ENCODE measurements at regions of chr1 and their contacts with region 1.

Region 1: GRCh38 chr1:161153679-161154426 is at the start of gene UFC1:
- DNase-seq: peak; percentile 94
- H3K4me3 Mint-ChIP-seq: peak within 1 kb of the TSS; percentile 92
- H3K27ac Mint-ChIP-seq: peak within 1 kb of the TSS; percentile 100
- H3K4me1 Mint-ChIP-seq: peaks cover 18% of the 10 kb centered on the region
- H3K27me3 Mint-ChIP-seq: no peaks in the 10 kb centered on the region
- CTCF ChIP-seq: no peak
- total RNA-seq, gene UFC1: 123 and 125 TPM in 2 replicates

Region 2: DNA sequence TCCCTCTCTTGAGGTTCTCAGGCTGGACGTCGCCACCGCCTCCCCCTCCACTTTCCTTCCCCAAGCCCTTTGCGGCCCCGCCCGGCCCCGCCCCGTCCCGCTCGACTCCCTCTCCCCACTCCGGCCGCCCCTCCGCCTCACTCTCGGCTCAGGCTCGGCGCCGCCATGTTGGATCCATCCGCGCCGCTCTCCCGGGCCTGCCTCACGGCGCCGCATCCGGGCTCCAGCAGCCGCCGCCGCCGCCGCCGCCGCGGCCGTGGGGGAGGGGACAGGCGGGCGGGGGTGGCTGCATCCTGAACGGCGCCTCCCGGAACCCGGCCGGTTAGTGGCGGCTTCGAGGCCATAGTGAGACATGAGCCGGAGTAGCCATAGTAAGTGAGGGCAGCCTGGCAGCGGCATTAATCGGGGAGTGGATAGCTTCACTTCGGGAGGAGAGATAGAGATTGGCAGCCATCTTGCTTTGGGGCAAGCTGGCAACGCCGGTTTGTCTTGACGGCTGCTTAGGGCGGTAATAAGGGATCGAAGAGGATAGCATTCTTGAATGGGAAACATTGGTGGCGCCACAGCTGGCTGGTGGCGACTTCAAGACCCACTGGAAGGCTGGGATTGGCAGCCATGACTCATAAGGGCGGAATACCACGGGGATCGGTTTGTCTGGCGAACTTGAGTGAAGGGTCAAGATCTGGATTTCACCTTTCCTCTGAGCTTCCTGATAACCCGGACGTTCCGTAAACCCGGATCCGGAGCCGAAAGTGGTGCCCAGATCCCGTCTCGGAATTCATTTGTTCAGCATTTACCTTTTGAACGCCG is 21.2 kb before region 1 on chr1 and contains the start of gene DEDD:
- CTCF ChIA-PET with region 1: interaction called, 8 read pairs
- POLR2A ChIA-PET with region 1: interaction called, 210 read pairs
- intact Hi-C with region 1: no loop called
- DNase-seq: peak; percentile 99
- H3K4me3 Mint-ChIP-seq: no peak within 1 kb of the TSS
- H3K27ac Mint-ChIP-seq: no peak within 1 kb of the TSS
- H3K4me1 Mint-ChIP-seq: peaks cover 23% of the 10 kb centered on the region
- H3K27me3 Mint-ChIP-seq: no peaks in the 10 kb centered on the region
- CTCF ChIP-seq: no peak
- total RNA-seq, gene DEDD: 63.1 and 73.6 TPM in 2 replicates

Region 3: GRCh38 chr1:161139765-161140164 is 14.1 kb before region 1 on chr1:
- CTCF ChIA-PET with region 1: interaction called, 10 read pairs
- POLR2A ChIA-PET with region 1: interaction called, 210 read pairs
- intact Hi-C with region 1: no loop called
- DNase-seq: peak; percentile 77
- H3K4me3 Mint-ChIP-seq: no peak overlapping the region
- H3K27ac Mint-ChIP-seq: no peak overlapping the region
- H3K4me1 Mint-ChIP-seq: peaks cover 4% of the 10 kb centered on the region
- H3K27me3 Mint-ChIP-seq: no peaks in the 10 kb centered on the region
- CTCF ChIP-seq: peak; percentile 64

Region 4: DNA sequence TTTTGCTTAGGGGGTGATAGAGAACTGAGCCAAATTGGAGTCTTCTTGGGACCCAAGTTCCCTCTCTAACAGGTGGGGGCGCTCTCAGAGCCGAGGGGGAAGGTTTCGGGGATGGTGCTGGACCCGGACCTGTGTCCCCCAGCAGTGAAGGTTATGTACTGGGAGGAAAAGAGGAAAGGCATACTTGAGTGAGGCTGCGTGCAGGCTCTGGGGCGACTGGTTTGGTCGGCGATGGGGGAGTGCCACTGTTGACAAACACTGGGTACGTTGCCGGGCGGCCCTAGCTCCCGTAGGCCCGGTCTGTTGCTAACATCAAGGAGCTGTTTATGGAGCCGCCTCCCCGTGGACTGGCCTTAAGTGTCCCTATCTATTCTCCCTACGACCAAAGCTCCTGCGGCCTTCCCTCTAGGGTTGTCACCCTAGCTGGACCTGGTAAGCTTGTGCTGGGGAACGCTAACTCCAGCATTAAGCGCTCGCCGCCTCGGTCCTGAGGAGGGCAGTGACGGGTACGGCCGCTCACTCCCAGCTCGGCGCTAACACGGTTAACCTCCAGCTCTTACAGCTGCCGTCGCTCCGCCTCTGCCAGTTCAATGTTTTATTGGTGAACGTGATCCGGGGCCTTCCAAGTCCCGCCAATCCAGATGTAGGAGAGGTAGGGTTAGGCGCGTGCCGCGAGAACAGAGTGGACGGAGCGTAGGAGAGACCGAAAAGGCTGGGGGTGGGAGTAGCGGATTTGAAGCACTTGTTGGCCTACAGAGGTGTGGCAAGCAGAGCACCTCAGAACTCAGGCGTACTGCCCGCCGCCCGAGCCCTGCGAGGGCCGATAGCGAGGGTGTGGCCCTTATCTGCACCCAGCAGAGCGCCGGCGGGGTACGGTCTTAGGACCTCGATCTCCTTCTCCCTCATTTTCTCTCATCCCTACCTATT is 12.2 kb after region 1 on chr1 and contains the start of gene PPOX:
- CTCF ChIA-PET with region 1: interaction called, 26 read pairs
- POLR2A ChIA-PET with region 1: interaction called, 58 read pairs
- intact Hi-C with region 1: no loop called
- DNase-seq: peak; percentile 100
- H3K4me3 Mint-ChIP-seq: peak within 1 kb of the TSS; percentile 98
- H3K27ac Mint-ChIP-seq: peak within 1 kb of the TSS; percentile 100
- H3K4me1 Mint-ChIP-seq: peaks cover 47% of the 10 kb centered on the region
- H3K27me3 Mint-ChIP-seq: no peaks in the 10 kb centered on the region
- CTCF ChIP-seq: peak; percentile 36
- total RNA-seq, gene PPOX: 30.3 and 32.4 TPM in 2 replicates

Measured in MCF 10A (cell line).